Activated CD4-positive, alpha-beta memory T cell treated with anti-CD3 and anti-CD28 coated beads for 36 hours (primary cell): ENCODE measurements at regions of chr12 and their contacts with region 1.

Region 1: DNA sequence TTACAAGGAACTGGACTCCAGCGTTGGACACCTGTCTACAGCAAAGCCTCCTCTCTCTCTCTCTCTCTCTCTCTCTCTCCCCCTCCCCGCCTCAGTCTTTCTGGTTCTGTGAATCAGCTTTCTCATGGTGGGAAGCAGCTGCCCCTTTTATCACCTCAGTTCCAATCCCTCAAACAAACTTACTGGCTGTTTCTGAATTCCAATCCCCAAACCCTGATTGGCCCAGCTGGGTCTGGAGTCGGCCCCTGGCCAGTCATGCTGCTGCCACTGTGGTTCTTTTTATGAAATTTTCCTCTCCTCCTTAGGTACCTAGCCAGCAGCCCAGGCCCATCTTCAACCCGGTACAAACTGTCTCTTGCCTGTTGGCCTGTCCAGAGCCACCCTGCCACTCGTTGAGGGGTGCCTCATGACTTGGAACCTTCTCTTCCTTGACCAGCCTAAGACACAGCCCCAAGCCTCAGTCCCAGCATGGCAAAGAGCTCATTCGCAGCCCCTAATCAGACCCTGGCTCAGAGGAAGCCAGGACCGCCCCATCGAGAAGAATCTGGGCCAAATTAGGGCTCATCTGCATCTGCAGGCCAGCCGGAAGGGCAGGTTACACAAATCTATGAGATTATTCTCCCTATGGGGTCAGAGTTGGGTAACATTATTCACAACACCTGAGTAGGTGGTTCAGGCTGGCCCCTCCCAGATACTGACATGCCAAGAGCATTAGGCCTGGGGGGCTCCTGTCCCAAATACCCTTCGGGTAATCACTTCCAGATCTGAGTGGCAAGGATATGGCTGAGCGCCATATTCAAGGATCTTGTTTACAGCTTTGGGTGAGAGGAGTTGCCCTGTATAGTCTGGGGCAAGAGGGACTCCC is 9.5 kb upstream of the MORN3 start:
- DNase-seq: no peak
- H3K4me3 Mint-ChIP-seq: no peak overlapping the region
- H3K27ac Mint-ChIP-seq: no peak overlapping the region
- H3K4me1 Mint-ChIP-seq: peaks cover 9% of the 10 kb centered on the region
- H3K27me3 Mint-ChIP-seq: no peaks in the 10 kb centered on the region

Region 2: DNA sequence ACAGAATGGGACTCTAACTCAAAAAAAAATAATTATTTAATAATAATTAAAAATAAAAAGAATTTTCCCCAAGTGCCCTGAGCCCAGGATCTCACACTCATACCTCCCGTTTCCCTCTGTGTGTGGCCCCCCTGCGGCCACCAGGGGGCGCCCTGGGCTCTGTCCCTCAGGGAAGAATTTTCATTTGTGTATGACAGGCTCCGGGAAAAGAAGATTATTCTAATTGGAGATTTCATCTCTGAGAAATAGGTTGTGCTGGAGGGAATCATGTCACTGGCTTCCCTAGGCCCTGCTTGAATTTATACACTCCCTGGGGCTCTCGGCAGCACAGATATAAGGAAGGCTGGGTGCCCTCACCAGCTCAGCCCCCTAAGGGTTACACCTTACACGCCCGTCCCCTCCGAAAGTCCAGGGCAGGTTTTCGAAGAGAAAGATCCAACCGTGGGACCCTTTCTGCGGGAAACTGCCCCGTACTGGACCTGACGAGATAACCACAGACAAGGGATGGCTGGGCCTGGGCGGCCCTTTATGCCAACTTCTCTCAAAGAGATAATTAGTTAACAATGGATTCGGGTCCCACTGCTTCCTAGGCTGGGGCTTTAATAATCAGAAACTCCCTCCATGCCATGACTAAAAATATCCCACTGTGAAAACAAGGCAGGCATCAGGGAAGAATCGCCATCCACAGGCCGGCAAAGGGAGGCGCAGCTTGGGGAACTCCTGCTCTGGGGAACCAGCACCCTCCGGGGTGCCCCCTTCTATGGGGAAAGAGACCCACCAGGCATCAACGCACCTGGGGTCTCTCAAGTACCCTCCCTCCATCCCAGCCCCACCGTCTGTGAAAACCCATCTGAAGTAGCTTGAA is 178.8 kb before region 1 on chr12:
- CTCF ChIA-PET with region 1: interaction called, 25 read pairs
- POLR2A ChIA-PET with region 1: interaction called, 3 read pairs
- intact Hi-C with region 1: loop called (anchors 2 kb)
- DNase-seq: peak; percentile 79
- H3K4me3 Mint-ChIP-seq: no peak overlapping the region
- H3K27ac Mint-ChIP-seq: no peak overlapping the region
- H3K4me1 Mint-ChIP-seq: peaks cover 7% of the 10 kb centered on the region
- H3K27me3 Mint-ChIP-seq: no peaks in the 10 kb centered on the region

Region 3: DNA sequence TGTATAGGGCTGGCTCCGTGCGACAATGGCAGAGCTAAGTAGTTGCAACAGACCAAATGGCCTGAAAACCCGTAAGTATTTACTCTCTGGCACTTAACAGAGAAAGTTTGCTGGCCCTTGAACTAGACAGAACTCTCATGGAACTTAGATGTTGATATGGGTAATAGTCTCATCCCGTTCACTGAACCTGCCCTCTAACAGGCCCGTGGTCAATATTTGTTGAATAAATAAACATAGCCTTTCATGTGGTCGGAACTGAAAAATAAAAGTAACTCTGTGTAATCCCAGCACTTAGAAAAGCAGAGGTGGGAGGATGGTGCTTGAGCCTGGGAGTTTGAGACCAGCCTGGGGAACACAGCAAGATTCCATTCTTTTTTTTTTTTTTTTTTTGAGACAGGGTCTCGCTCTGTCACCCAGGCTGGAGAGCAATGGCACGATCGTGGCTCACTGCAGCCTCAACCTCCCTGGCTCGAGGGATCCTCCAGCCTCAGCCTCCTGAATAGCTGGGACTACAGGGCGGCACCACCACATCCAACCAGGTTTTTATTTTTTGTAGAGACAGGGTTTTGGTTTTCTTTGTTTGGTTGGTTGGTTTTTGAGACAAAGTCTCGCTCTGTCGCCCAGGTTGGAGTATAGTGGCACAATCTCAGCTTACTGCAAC is 127.8 kb before region 1 on chr12:
- CTCF ChIA-PET with region 1: interaction called, 42 read pairs
- POLR2A ChIA-PET with region 1: no interaction called
- intact Hi-C with region 1: loop called (anchors 5 kb)
- DNase-seq: no peak
- H3K4me3 Mint-ChIP-seq: no peak overlapping the region
- H3K27ac Mint-ChIP-seq: no peak overlapping the region
- H3K4me1 Mint-ChIP-seq: peaks cover 5% of the 10 kb centered on the region
- H3K27me3 Mint-ChIP-seq: no peaks in the 10 kb centered on the region

Region 4: GRCh38 chr12:121579981-121580868 is 98.7 kb before region 1 on chr12:
- CTCF ChIA-PET with region 1: no interaction called
- POLR2A ChIA-PET with region 1: no interaction called
- intact Hi-C with region 1: loop called (anchors 5 kb)
- DNase-seq: peak; percentile 85
- H3K4me3 Mint-ChIP-seq: peak overlapping the region; percentile 86
- H3K27ac Mint-ChIP-seq: peak overlapping the region; percentile 92
- H3K4me1 Mint-ChIP-seq: peaks cover 33% of the 10 kb centered on the region
- H3K27me3 Mint-ChIP-seq: no peaks in the 10 kb centered on the region

Region 5: GRCh38 chr12:121933522-121934308 is 254.8 kb after region 1 on chr12:
- CTCF ChIA-PET with region 1: no interaction called
- POLR2A ChIA-PET with region 1: no interaction called
- intact Hi-C with region 1: no loop called
- DNase-seq: no peak
- H3K4me3 Mint-ChIP-seq: no peak overlapping the region
- H3K27ac Mint-ChIP-seq: no peak overlapping the region
- H3K4me1 Mint-ChIP-seq: no peaks in the 10 kb centered on the region
- H3K27me3 Mint-ChIP-seq: no peaks in the 10 kb centered on the region